Sciatic nerve (tissue), 2 donors: ENCODE measurements at regions of chr2 and their contacts with region 1.

Region 1: GRCh38 chr2:134245340-134245984 is 8.4 kb upstream of the MGAT5 start:
- DNase-seq: peak; percentile 89
- ATAC-seq: peak; percentile 79

Region 2: GRCh38 chr2:133886735-133887660 is 358.5 kb before region 1 on chr2:
- intact Hi-C with region 1: loop called (anchors 2 kb)
- DNase-seq: peak; percentile 83
- ATAC-seq: peak; percentile 86

Region 3: GRCh38 chr2:134137182-134137611 is 108.3 kb before region 1 on chr2:
- intact Hi-C with region 1: loop called (anchors 10 kb)
- DNase-seq: no peak
- ATAC-seq: peak; percentile 67